ENCODE measurements at regions of chr6 and their contacts with region 1.

Region 1: DNA sequence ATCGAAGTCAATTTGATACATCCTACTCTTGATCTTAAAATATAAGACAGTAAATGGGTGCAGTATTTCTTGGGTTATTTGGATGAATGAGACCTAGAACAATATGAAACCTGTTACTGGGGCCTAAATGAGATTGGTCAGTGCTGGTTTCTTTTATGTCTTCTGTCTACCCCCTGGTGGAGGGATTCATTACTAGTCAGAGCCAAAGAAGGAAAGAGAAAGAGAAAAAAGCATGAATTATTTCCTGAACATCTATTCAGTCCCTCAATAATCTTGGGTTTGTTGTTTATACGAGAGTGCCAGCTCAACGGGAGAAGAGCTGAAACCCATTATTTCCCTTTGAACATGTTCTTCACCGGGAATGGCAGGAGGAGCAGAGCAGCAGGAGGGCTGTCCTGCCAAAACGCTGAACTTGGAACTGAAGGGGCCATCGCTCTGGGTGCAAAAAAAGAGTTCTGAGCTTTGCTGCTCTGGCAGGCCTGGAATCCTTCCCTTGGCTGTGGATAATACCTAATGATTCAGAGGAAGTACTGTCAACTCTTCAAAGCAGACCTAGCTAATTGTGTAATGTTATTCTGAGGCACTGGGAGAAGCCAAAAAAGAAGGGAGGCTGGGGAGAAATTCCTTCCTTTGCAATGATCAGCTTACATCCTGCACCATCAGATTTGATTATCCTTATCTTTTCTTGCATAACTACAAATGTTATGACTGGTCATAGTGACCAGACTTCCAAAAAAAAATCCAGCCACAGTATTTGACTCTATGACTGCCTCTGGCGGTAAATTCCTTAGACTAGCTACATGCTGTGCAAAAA is 72.0 kb downstream of the BLOC1S5 start:
- H3K4me3 ChIP-seq: no peak overlapping the region
- H3K27ac ChIP-seq: no peak overlapping the region
- H3K4me1 ChIP-seq: peaks cover 7% of the 10 kb centered on the region; the same call in 1 of the 2 replicates
- CTCF ChIP-seq: no peak

Region 2: DNA sequence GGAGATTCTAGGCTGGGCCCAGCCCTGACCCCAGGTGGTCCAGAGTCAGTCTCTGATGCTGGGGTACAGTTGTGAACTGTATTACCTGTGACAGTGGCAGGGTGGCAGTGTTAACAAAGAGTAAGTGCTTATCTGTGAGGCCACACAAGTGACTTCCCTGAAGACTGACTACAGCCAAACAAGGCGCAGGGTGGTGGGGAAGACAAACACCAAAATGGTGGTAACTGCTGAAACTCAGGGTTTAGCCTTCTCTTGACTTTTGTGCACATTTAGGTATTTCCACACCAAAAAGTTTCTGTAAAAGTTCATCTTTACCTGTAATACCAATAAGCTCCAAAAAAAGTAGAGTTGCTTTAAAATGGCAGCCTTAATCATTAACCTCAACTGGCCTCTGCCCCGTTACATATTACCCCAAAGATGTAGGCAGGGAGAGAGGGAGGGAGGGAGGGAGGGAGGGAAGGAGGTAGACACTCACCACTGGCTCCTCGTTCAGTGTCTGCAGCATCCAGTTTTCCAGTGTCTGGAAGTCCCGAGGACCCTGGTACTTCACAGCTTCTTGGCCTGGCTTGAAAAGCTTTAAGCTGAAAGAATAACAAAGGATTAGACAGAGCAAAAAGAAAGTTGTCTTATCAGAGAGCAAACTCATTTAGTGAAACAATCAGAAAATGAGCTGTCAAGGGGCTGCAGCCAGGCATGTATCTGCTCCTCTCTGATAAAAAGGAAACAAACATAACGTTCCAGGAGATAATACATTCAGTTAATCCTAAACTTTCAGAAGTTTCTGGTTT is 92.9 kb before region 1 on chr6:
- CTCF ChIA-PET with region 1: interaction called, 12 read pairs
- POLR2A ChIA-PET with region 1: no interaction called
- H3K4me3 ChIP-seq: no peak overlapping the region
- H3K27ac ChIP-seq: no peak overlapping the region
- H3K4me1 ChIP-seq: no peaks in the 10 kb centered on the region
- CTCF ChIP-seq: peak; percentile 45; the same call in 1 of the 2 replicates

Region 3: DNA sequence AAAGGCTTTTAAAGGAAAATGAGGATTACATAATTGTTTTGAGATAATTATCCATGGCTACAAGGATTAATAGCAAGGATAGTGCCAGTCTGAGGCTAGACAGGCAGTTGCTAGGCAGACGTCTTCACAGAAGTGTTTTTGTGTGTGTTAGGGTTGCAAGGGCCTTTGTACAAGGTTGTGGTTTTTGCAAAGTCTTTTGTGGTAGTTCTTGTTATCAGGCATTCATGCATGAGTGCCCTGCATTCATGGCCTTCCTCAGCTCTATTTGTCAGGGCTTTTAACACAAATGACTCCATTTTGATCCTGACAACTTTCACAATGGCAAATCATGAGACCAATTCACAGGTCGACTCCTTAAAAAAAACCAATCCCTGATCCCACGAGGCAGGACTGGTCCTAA is 13.5 kb before region 1 on chr6:
- CTCF ChIA-PET with region 1: interaction called, 29 read pairs
- POLR2A ChIA-PET with region 1: interaction called, 5 read pairs
- H3K4me3 ChIP-seq: no peak overlapping the region
- H3K27ac ChIP-seq: no peak overlapping the region
- H3K4me1 ChIP-seq: peaks cover 2% of the 10 kb centered on the region; the same call in 1 of the 2 replicates
- CTCF ChIP-seq: no peak

Region 4: DNA sequence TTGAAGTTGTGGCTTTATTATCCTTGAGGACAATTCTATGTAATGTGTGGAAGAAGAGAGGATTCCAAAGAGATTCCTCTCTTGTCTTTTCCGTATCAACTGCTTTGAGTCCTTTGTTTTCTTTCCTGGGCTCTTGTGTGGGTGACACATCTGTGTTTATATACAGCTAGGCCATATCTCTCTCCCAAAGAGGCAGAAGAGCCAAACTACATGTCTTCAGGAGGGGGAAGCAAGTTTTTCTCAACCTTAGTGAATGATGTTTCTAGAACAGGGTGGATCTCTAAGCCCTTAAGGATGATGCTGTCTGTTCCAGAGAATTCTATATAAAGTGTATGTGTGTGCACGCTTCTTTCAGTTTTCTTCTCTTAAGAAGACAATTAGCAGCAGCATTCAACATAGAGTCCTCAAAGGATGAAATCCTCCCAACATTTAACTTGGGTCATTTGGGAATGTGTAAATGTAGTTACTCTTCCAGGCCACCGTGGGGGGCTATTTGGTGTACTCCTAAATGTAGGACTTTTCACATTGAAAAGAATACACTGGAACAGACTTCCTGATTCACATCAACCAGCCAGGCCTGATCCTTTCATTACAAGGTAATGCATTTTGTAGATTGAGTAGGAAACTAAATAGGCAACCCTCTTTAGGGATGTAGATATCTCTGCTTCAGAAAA is 203.0 kb after region 1 on chr6:
- CTCF ChIA-PET with region 1: no interaction called
- POLR2A ChIA-PET with region 1: no interaction called
- H3K4me3 ChIP-seq: no peak overlapping the region
- H3K27ac ChIP-seq: no peak overlapping the region
- H3K4me1 ChIP-seq: no peaks in the 10 kb centered on the region
- CTCF ChIP-seq: no peak

Measured in HEK293 (cell line).